ENCODE measurements at regions of chr9 and their contacts with region 1.

Region 1: DNA sequence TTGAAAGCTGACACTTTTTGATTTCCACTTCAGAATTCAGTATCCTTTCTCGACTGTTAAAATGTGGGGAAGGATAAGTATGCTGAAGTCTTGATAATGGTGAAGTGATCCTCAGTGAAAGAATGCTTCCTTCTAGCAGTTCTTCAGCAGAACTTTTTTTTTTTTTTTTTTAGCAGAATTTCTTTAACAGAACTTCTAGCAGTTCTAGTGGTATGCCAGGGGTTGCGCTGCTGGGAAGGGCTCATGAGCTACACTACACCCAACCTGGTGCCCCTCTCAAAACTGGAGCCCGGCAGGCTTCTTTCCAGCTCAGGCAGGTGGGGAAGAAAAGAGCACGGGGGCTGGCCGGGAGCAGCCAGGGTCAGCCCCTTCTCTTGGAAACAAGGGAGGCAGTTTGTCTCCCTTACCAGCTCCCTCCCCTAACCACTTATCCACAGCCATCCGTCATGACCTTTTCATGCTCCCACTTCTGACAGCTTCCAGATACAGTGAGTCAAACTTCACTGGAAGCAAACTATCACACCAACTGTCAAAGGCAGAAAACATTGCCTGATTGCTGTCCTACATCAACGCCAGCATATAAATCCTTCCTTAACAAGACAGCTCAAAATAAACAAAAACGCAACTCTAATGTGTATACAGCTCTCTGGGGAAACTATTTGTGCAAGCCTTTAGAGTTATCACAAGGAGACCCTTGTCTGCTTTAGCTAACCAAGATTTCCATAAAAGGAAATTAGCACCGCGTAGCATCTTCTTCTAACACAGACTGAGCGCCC is 211.5 kb downstream of the GAPVD1 start:
- DNase-seq: no peak
- ATAC-seq: peak; percentile 85

Region 2: GRCh38 chr9:125293134-125293533 is 180.0 kb before region 1 on chr9:
- intact Hi-C with region 1: no loop called
- DNase-seq: no peak
- ATAC-seq: no peak

Region 3: DNA sequence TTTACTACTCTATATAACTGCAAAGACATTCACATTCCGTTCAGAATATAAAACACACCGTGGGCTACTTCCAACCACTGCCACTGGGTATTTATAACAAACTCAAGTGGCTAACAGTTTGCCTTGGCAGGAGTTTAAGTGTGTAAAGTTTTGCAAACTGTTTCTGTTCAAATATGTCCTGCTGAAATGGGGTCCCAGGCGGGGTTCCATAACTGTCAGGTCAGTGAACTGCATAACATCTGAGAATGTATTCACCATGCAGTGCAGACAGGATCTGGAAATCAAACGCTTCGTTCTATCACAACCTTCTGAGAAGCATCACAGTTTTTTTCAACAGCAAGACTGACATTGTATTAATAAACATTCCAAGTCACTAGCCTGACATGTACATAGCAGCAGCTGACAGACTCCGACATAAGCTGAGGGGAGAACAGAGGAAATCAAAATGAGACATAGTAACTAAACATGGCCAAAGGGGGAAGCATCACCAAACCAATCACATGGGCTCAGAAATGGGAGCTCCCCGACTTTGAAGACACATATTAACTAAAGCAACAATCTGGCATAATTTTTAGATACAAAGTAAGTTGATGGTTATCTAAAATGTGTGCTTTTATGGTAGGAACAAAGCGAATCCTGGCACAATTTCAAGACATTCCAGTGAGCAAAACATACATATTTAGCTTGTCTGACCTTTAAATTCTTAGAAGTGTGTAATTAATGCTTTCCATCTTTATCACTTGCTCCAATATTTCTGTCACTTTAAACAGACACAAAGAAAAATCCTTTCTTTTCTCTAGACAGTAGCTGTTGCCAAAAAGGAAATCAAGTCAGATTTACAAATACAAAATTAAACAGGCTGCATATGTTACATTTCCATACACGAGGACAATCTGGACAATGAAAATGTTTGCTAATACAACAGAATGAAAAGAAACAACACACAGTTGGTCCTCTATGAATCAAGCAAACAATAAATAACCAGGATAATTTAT is 77.1 kb after region 1 on chr9:
- intact Hi-C with region 1: loop called (anchors 2 kb)
- DNase-seq: no peak
- ATAC-seq: peak; percentile 56

Region 4: GRCh38 chr9:125674981-125675973 is 202.2 kb after region 1 on chr9:
- intact Hi-C with region 1: loop called (anchors 5 kb)
- DNase-seq: no peak
- ATAC-seq: peak; percentile 34

Measured in Right ventricle myocardium inferior (tissue), 1 donor.